ENCODE measurements at regions of chr12 and their contacts with region 1.

Region 1: GRCh38 chr12:56041552-56042429 is at the start of gene RPS26:
- DNase-seq: peak; percentile 97
- ATAC-seq: peak; percentile 92
- H3K4me3 Mint-ChIP-seq: peak within 1 kb of the TSS; percentile 91
- H3K27ac Mint-ChIP-seq: peak within 1 kb of the TSS; percentile 99
- H3K4me1 Mint-ChIP-seq: peaks cover 61% of the 10 kb centered on the region
- H3K27me3 Mint-ChIP-seq: no peaks in the 10 kb centered on the region
- total RNA-seq, gene RPS26: 33.9 to 64.0 TPM

Region 2: DNA sequence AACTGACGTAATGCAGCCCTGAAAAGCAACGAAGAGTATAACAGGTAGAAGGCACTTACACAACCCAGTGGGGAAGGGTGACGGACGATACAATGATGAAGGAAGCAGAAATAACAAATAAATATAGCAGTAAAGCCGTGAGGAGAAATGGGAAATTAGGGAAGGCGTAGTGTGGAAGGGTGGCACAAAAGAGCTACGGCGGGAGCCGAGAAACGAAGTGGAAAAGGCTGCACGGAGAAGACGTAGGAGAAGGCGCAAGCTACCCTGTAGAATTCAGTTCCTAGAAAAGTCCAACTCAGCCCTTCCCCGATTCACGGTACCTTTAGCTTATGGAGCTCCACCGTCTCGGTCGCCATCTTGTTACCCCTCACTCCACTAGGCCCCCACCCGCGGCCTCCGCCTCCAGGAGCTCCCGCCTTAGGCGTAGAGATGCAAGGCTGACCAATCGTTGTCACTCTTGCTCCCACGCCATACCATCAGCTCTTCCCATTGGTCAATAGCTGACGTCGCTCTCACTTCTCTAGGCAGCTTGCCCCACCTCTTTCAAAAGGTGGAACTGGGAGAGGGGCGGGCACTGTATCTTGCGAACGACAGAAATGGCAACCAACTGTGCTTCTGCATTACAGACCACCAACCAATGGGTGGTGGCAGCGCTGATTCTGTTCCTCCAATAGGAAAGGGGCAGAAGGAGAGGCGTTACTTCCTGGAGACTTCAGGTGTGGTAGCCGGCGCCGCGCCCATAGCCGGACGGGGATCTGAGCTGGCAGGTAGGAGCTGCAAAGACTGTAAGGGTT is 224.2 kb before region 1 on chr12 and contains the starts of genes ORMDL2 and SARNP:
- CTCF ChIA-PET with region 1: interaction called, 3 read pairs
- POLR2A ChIA-PET with region 1: interaction called, 8 read pairs
- intact Hi-C with region 1: loop called (anchors 1 to 2 kb)
- DNase-seq: peak; percentile 97
- ATAC-seq: peak; percentile 98
- H3K4me3 Mint-ChIP-seq: no peak within 1 kb of the TSS
- H3K27ac Mint-ChIP-seq: no peak within 1 kb of the TSS
- H3K4me1 Mint-ChIP-seq: peaks cover 49% of the 10 kb centered on the region
- H3K27me3 Mint-ChIP-seq: no peaks in the 10 kb centered on the region
- total RNA-seq, gene ORMDL2: 29.4 to 35.6 TPM
- total RNA-seq, gene SARNP: 111 to 114 TPM

Region 3: DNA sequence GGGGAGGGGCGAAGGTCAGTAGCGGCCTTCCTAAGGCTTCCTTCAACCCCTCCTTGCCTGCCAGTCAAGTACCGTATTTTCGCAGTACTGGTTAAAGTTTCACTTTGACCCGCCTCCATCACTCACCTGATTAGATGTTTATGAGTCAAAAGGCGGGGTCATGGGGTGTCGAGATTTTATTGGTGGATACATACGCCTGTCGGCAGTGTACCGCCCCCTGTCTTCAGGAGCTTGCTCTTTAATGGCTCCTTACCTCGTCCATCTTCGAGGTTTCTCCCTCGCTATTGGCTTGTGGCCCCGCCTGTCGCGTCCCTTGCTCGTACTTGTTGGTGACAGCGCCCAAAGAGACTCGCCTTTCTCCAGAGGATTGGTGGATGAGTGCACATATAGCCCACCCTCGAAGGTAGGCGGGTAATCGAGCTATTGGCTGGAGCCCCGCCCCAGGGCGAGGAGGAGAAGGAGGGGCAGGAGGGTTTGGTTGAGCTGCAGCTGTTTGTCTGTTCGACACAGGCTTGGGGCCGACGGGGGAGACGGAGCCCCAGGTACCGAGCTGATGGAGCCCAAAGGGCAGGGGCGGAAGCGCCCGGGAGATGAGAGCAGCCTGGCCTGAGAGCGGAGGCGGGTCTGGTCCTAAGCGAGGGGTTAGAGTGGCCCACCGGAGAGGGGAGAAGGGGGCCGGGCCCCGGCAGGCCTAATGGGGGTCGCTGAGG is 68.0 kb before region 1 on chr12 and contains the start of gene RAB5B:
- CTCF ChIA-PET with region 1: interaction called, 4 read pairs
- POLR2A ChIA-PET with region 1: interaction called, 10 read pairs
- intact Hi-C with region 1: loop called (anchors 1 kb)
- DNase-seq: peak; percentile 98
- ATAC-seq: peak; percentile 93
- H3K4me3 Mint-ChIP-seq: no peak within 1 kb of the TSS
- H3K27ac Mint-ChIP-seq: no peak within 1 kb of the TSS
- H3K4me1 Mint-ChIP-seq: peaks cover 28% of the 10 kb centered on the region
- H3K27me3 Mint-ChIP-seq: no peaks in the 10 kb centered on the region
- total RNA-seq, gene RAB5B: 33.2 to 35.1 TPM

Region 4: GRCh38 chr12:56007564-56008559 is 33.9 kb before region 1 on chr12:
- CTCF ChIA-PET with region 1: interaction called, 4 read pairs
- POLR2A ChIA-PET with region 1: interaction called, 5 read pairs
- intact Hi-C with region 1: loop called in 1 of 2 experiments (anchors 1 kb)
- DNase-seq: peak; percentile 82
- ATAC-seq: peak; percentile 83
- H3K4me3 Mint-ChIP-seq: peak overlapping the region; percentile 78
- H3K27ac Mint-ChIP-seq: peak overlapping the region; percentile 92
- H3K4me1 Mint-ChIP-seq: peaks cover 28% of the 10 kb centered on the region
- H3K27me3 Mint-ChIP-seq: no peaks in the 10 kb centered on the region

Region 5: GRCh38 chr12:56029666-56030293 is 12.0 kb before region 1 on chr12:
- CTCF ChIA-PET with region 1: interaction called, 10 read pairs
- POLR2A ChIA-PET with region 1: no interaction called
- intact Hi-C with region 1: no loop called
- DNase-seq: peak; percentile 63
- ATAC-seq: peak; percentile 60
- H3K4me3 Mint-ChIP-seq: no peak overlapping the region
- H3K27ac Mint-ChIP-seq: no peak overlapping the region
- H3K4me1 Mint-ChIP-seq: peaks cover 29% of the 10 kb centered on the region
- H3K27me3 Mint-ChIP-seq: no peaks in the 10 kb centered on the region

Region 6: GRCh38 chr12:56152318-56153033 is 110.7 kb after region 1 on chr12 and contains the start of gene MYL6B:
- CTCF ChIA-PET with region 1: no interaction called
- POLR2A ChIA-PET with region 1: no interaction called
- intact Hi-C with region 1: loop called in 1 of 2 experiments (anchors 1 kb)
- DNase-seq: peak; percentile 98
- ATAC-seq: peak; percentile 92
- H3K4me3 Mint-ChIP-seq: peak within 1 kb of the TSS; percentile 88
- H3K27ac Mint-ChIP-seq: peak within 1 kb of the TSS; percentile 99
- H3K4me1 Mint-ChIP-seq: peaks cover 29% of the 10 kb centered on the region
- H3K27me3 Mint-ChIP-seq: no peaks in the 10 kb centered on the region
- total RNA-seq, gene MYL6B: 76.3 to 79.3 TPM

Region 7: GRCh38 chr12:56413392-56413791 is 371.6 kb after region 1 on chr12:
- CTCF ChIA-PET with region 1: no interaction called
- POLR2A ChIA-PET with region 1: no interaction called
- intact Hi-C with region 1: no loop called
- DNase-seq: no peak
- ATAC-seq: no peak
- H3K4me3 Mint-ChIP-seq: no peak overlapping the region
- H3K27ac Mint-ChIP-seq: no peak overlapping the region
- H3K4me1 Mint-ChIP-seq: no peaks in the 10 kb centered on the region
- H3K27me3 Mint-ChIP-seq: no peaks in the 10 kb centered on the region

Region 8: DNA sequence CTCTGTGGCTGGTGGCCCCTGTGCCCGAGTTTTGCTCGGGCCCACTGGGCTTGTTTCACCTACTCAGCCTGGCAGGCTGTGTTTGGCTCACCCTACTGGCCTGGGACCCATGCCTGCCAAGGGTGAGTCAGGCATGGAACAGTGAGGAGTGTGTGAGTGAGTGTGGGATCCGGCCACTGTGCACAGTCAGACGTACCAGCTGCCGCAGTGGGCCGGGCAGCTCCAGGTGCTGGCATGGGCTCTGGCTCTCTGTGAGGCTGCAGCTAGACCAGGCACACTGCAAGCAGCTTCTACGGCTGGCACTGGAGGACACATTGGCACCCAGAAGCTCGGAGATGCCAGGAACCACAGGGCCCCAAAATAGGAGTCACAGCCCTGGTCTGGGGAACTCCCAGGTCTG is 762.0 kb after region 1 on chr12:
- CTCF ChIA-PET with region 1: no interaction called
- POLR2A ChIA-PET with region 1: no interaction called
- intact Hi-C with region 1: no loop called
- DNase-seq: no peak
- ATAC-seq: no peak
- H3K4me3 Mint-ChIP-seq: no peak overlapping the region
- H3K27ac Mint-ChIP-seq: no peak overlapping the region
- H3K4me1 Mint-ChIP-seq: no peaks in the 10 kb centered on the region
- H3K27me3 Mint-ChIP-seq: no peaks in the 10 kb centered on the region

Measured in activated CD4-positive, alpha-beta T cell treated with anti-CD3 and anti-CD28 coated beads for 36 hours (primary cell).